Posterior cingulate gyrus (tissue), 11 donors: ENCODE measurements at regions of chr7 and their contacts with region 1.

Region 1: GRCh38 chr7:47435889-47436312 is 146.0 kb downstream of the TNS3 start:
- DNase-seq: peak in 8 of 10 donors; percentile 34 to 93 (median 70)

Region 2: GRCh38 chr7:47266131-47266706 is 169.7 kb before region 1 on chr7:
- intact Hi-C with region 1: loop called (anchors 5 kb)
- DNase-seq: peak in 7 of 10 donors; percentile 56 to 95 (median 68)

Region 3: DNA sequence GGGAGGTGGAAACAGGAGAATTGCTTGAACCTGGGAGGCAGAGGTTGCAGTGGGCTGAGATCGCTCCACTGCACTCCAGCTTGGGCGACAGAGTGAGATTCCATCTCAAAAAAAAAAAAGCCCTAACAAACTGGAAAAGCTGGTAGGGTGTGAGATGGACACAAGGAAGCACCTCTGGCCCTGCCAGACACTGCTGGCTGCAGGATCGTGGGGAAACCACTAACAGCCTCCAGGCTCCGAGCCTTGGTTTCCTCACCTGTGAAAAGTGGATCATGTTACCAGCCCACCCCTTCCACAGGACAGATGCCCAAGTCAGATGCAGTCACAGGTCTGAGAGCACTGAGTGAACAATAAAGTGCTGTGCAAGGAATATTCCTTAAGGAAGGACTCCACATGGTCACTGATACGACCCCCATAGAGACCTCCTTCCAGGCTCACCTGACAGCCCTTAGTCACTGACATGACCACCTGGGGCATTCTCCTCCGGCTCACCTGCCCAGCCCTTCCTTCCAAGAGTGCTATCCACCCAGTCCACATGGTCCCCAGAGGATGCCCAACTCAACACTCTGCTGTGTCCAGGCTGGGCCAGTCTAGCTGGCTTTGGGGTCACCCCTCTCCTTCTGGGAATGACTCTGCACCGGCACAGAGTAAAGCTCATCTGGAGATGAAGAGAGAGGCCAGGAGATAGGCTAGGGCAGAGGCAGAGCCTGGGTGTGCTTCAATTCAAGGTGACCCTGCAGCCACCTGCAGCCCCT is 154.9 kb before region 1 on chr7:
- intact Hi-C with region 1: no loop called
- DNase-seq: no peak

Region 4: DNA sequence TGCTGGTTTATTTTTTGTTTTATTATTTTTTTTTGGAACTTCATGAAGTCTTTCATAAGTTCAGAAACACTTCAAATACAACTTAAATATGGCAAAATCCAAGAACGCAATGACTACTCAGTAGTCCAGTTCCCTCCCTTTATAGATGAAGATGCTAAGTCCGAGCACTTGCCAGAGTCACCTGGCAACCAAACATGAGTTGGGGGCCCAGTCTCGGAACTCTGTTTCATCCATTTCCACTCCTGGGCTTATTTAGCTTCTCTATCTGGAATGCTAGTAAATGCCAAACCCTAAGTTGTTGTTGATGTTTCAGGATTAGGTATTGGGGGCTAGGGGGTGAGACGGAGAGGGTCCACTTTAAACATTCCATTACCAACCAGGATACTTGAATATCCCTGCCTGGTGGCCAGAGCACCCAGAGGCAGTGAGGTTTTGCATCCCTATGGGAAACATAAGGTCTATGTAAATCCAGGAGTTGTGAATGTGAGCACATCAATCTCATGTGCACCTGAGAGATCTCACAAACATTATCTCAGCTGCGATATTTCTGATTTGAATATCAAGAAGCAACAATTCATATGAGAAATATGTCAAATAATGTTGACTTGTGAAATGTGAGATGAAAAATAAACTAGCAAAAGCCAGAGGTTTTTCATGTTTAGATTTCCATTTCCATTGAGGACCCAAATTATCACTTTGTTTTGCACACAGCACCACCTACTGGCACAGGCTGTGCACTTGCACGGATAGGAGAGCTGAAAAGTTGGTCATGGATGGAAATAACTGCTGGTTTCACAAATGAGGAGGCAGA is 383.1 kb after region 1 on chr7:
- intact Hi-C with region 1: loop called (anchors 10 kb)
- DNase-seq: peak in 7 of 10 donors; percentile 51 to 93 (median 72)